CD8-positive, alpha-beta T cell (primary cell): ENCODE measurements at regions of chr15 and their contacts with region 1.

Region 1: GRCh38 chr15:31379042-31379441 is 52.4 kb downstream of the KLF13 start:
- DNase-seq: peak in 3 of 9 experiments; percentile 36 to 56 (median 40)
- ATAC-seq: peak; percentile 32
- H3K4me3 ChIP-seq: no peak overlapping the region
- H3K4me3 Mint-ChIP-seq: no peak overlapping the region
- H3K27ac ChIP-seq: peak overlapping the region in 1 of 2 experiments; percentile 64
- H3K27ac Mint-ChIP-seq: peak overlapping the region; percentile 93
- H3K4me1 ChIP-seq: peaks cover 49% of the 10 kb centered on the region
- H3K4me1 Mint-ChIP-seq: peaks cover 70% of the 10 kb centered on the region
- H3K27me3 ChIP-seq: no peaks in the 10 kb centered on the region
- H3K27me3 Mint-ChIP-seq: no peaks in the 10 kb centered on the region
- CTCF ChIP-seq: no peak

Region 2: DNA sequence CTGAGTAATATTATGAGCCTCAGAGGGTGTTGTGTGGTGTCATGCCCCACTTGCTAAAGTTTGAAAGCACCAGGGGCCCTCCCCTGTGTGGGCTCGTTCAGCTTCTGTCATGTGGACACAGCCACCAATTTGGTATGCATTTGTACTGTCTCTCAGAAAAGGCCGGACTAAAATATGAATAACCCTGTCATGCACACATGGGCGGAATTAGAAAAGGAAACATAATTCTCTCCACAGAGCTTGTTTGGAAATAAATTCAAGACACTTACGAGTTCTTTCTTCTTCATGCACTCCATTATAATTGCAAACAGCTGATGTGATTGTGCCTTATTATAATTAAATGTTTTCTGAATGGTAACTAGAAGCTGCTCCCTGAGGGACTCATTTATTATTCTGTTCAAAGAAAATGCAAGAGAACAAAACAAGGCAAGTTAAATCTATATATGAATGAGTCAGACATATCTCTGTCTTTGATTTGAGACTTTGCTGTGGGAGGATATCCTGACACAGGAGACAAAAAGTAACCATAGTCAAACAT is 316.7 kb before region 1 on chr15:
- CTCF ChIA-PET with region 1: no interaction called
- POLR2A ChIA-PET with region 1: no interaction called
- intact Hi-C with region 1: no loop called
- DNase-seq: no peak
- ATAC-seq: no peak
- H3K4me3 ChIP-seq: no peak overlapping the region
- H3K4me3 Mint-ChIP-seq: no peak overlapping the region
- H3K27ac ChIP-seq: no peak overlapping the region
- H3K27ac Mint-ChIP-seq: no peak overlapping the region
- H3K4me1 ChIP-seq: no peaks in the 10 kb centered on the region
- H3K4me1 Mint-ChIP-seq: no peaks in the 10 kb centered on the region
- H3K27me3 ChIP-seq: no peaks in the 10 kb centered on the region
- H3K27me3 Mint-ChIP-seq: peaks cover 6% of the 10 kb centered on the region
- CTCF ChIP-seq: no peak

Region 3: GRCh38 chr15:31296646-31297574 is 82.1 kb before region 1 on chr15:
- CTCF ChIA-PET with region 1: no interaction called
- POLR2A ChIA-PET with region 1: no interaction called
- intact Hi-C with region 1: no loop called
- DNase-seq: peak in 2 of 9 experiments; percentile 3 to 41
- ATAC-seq: no peak
- H3K4me3 ChIP-seq: no peak overlapping the region
- H3K4me3 Mint-ChIP-seq: no peak overlapping the region
- H3K27ac ChIP-seq: no peak overlapping the region
- H3K27ac Mint-ChIP-seq: no peak overlapping the region
- H3K4me1 ChIP-seq: no peaks in the 10 kb centered on the region
- H3K4me1 Mint-ChIP-seq: no peaks in the 10 kb centered on the region
- H3K27me3 ChIP-seq: no peaks in the 10 kb centered on the region
- H3K27me3 Mint-ChIP-seq: peaks cover 3% of the 10 kb centered on the region
- CTCF ChIP-seq: no peak

Region 4: GRCh38 chr15:31391687-31392671 is 12.9 kb after region 1 on chr15:
- CTCF ChIA-PET with region 1: interaction called, 4 read pairs
- POLR2A ChIA-PET with region 1: interaction called, 5 read pairs
- intact Hi-C with region 1: loop called in 1 of 2 experiments (anchors 1 kb)
- DNase-seq: peak; percentile 62 to 92 (median 86)
- ATAC-seq: peak; percentile 82
- H3K4me3 ChIP-seq: peak overlapping the region; percentile 86 to 95
- H3K4me3 Mint-ChIP-seq: peak overlapping the region; percentile 91
- H3K27ac ChIP-seq: peak overlapping the region; percentile 80 to 81
- H3K27ac Mint-ChIP-seq: peak overlapping the region; percentile 95
- H3K4me1 ChIP-seq: peaks cover 44% of the 10 kb centered on the region
- H3K4me1 Mint-ChIP-seq: peaks cover 61% of the 10 kb centered on the region
- H3K27me3 ChIP-seq: no peaks in the 10 kb centered on the region
- H3K27me3 Mint-ChIP-seq: no peaks in the 10 kb centered on the region
- CTCF ChIP-seq: no peak